ENCODE measurements at regions of chr6 and their contacts with region 1.

Region 1: DNA sequence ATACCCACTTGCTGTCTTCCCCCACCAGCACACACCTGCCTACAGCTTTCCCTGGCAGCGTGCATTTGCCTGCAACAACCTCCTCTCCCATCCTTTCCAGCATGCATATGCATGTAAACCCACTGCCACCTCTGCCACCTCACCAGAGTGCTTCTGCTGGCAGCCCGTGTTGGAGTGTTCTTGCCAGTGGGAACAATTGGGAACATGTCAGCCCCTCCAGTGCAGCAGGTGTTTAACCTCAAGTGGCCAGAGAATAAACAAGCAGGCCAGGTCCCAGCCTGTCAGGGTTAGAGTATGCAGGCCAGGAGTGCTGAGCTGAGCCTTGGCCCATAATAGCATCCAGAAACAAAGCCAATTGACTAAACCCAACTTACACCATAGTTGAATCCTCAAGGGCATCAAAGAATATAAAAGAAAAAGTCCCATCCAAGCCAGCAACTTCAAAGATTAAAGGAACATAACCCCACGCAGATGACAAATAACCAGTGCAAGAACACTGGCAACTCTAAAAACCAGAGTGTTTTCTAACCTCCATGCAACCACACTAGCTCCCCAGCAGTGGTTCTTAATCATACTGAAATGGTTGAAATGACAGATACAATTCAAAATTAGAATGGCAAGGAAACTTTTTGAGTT is 1212.1 kb upstream of the CITED2 start:
- DNase-seq: peak; percentile 79
- H3K4me3 Mint-ChIP-seq: peak overlapping the region; percentile 65
- H3K27ac Mint-ChIP-seq: peak overlapping the region; percentile 93
- H3K4me1 Mint-ChIP-seq: peaks cover 32% of the 10 kb centered on the region
- H3K27me3 Mint-ChIP-seq: no peaks in the 10 kb centered on the region

Region 2: GRCh38 chr6:139375232-139376016 is 1211.1 kb before region 1 on chr6:
- intact Hi-C with region 1: loop called (anchors 5 kb)
- DNase-seq: peak; percentile 96
- H3K4me3 Mint-ChIP-seq: peak overlapping the region; percentile 99
- H3K27ac Mint-ChIP-seq: peak overlapping the region; percentile 98
- H3K4me1 Mint-ChIP-seq: peaks cover 32% of the 10 kb centered on the region
- H3K27me3 Mint-ChIP-seq: no peaks in the 10 kb centered on the region

Region 3: GRCh38 chr6:140572129-140572528 is 14.4 kb before region 1 on chr6:
- intact Hi-C with region 1: loop called (anchors 1 kb)
- DNase-seq: no peak
- H3K4me3 Mint-ChIP-seq: peak overlapping the region; percentile 31
- H3K27ac Mint-ChIP-seq: peak overlapping the region; percentile 76
- H3K4me1 Mint-ChIP-seq: peaks cover 19% of the 10 kb centered on the region
- H3K27me3 Mint-ChIP-seq: peaks cover 3% of the 10 kb centered on the region

Region 4: GRCh38 chr6:140711019-140711613 is 124.6 kb after region 1 on chr6:
- intact Hi-C with region 1: loop called (anchors 10 kb)
- DNase-seq: no peak
- H3K4me3 Mint-ChIP-seq: no peak overlapping the region
- H3K27ac Mint-ChIP-seq: no peak overlapping the region
- H3K4me1 Mint-ChIP-seq: no peaks in the 10 kb centered on the region
- H3K27me3 Mint-ChIP-seq: no peaks in the 10 kb centered on the region

Region 5: GRCh38 chr6:140809694-140810101 is 223.2 kb after region 1 on chr6:
- intact Hi-C with region 1: loop called (anchors 1 kb)
- DNase-seq: peak; percentile 72
- H3K4me3 Mint-ChIP-seq: no peak overlapping the region
- H3K27ac Mint-ChIP-seq: peak overlapping the region; percentile 79
- H3K4me1 Mint-ChIP-seq: peaks cover 7% of the 10 kb centered on the region
- H3K27me3 Mint-ChIP-seq: no peaks in the 10 kb centered on the region

Region 6: DNA sequence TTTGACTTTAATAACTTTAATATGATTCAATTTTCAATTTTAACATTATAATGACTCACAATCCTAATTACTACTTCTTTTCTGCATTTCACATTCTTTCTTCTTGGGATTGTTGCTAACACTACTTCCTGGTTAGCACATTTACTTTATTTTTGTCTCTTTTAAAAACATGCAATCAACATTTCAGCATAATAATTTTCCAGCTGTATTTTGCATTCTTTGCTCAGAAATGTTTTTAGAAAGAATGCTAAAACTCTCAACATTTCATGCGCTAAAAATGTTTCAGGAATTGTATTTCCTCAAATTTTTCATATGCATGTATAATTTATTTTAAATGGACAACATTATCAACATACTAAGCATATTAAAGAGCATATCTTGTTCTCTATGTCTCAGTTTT is 244.1 kb after region 1 on chr6:
- intact Hi-C with region 1: no loop called
- DNase-seq: no peak
- H3K4me3 Mint-ChIP-seq: no peak overlapping the region
- H3K27ac Mint-ChIP-seq: no peak overlapping the region
- H3K4me1 Mint-ChIP-seq: no peaks in the 10 kb centered on the region
- H3K27me3 Mint-ChIP-seq: peaks cover 3% of the 10 kb centered on the region

Measured in activated CD4-positive, alpha-beta T cell treated with anti-CD3 and anti-CD28 coated beads, Interleukin-2, amount 10 ng/mL, durations not matched to agents 24 days and 14 days (primary cell).